ENCODE measurements at regions of chr5 and their contacts with region 1.

Region 1: GRCh38 chr5:40464511-40464910 is 215.2 kb upstream of the PTGER4 start:
- DNase-seq: no peak
- ATAC-seq: no peak
- H3K4me3 ChIP-seq: no peak overlapping the region
- H3K27ac ChIP-seq: no peak overlapping the region
- H3K4me1 ChIP-seq: no peaks in the 10 kb centered on the region
- H3K27me3 ChIP-seq: no peaks in the 10 kb centered on the region

Region 2: DNA sequence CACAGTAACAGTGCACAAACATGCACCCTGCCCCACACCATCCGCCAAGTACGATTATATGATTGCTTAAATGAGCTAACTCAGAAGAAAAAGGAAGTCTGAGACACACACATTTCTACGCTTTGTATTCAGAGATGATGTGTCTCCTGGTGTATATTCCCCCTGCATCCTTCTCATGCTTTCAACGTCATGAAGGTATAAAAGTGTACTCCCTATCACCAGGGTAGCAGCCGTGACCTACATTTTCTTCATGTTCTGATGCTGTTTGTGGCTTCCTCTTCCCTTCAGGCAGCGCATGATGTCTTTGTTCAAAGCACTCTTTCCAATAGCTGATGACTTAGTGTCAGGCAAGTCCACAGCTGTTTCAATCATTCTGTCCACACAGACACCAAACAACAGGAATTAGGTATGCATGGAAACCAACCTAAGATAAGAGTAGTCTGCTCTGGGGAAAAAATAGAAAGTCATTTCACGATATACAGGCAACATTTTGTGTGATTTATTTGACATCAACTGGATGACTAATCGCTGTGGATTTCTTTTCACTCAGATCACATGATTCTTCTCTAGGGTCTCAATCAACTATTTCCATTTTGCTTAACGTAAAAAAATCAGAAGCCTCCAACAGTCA is 54.2 kb before region 1 on chr5:
- intact Hi-C with region 1: no loop called
- DNase-seq: no peak
- ATAC-seq: peak; percentile 61
- H3K4me3 ChIP-seq: no peak overlapping the region
- H3K27ac ChIP-seq: no peak overlapping the region
- H3K4me1 ChIP-seq: no peaks in the 10 kb centered on the region
- H3K27me3 ChIP-seq: no peaks in the 10 kb centered on the region

Region 3: GRCh38 chr5:40499518-40500273 is 35.2 kb after region 1 on chr5:
- intact Hi-C with region 1: loop called in 1 of 2 experiments (anchors 2 kb)
- DNase-seq: no peak
- ATAC-seq: no peak
- H3K4me3 ChIP-seq: no peak overlapping the region
- H3K27ac ChIP-seq: no peak overlapping the region
- H3K4me1 ChIP-seq: no peaks in the 10 kb centered on the region
- H3K27me3 ChIP-seq: no peaks in the 10 kb centered on the region

Region 4: DNA sequence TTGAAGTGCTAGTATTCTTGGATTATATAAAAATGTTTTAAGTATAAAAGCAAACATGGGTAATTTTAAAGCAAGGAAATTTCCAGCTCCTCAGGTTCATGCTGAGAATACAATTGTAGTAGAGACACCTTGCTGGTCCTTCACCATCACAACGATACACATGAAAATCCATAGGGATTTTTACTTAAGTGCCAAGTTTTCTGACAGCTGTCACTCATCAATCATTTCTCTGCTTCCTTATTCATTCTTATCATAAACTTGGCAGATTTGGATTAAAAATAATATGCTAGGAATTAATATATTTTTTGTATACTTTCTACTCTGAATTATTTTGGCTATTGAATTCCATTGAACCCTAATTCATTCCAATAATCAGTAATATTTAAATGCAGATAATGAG is 47.3 kb after region 1 on chr5:
- intact Hi-C with region 1: no loop called
- DNase-seq: no peak
- ATAC-seq: no peak
- H3K4me3 ChIP-seq: no peak overlapping the region
- H3K27ac ChIP-seq: no peak overlapping the region
- H3K4me1 ChIP-seq: no peaks in the 10 kb centered on the region
- H3K27me3 ChIP-seq: no peaks in the 10 kb centered on the region

Measured in aorta (tissue), 5 donors.